GM12878 (cell line): ENCODE measurements at regions of chr4 and their contacts with region 1.

Region 1: GRCh38 chr4:25123236-25123635 is 37.0 kb downstream of the SEPSECS start:
- DNase-seq: peak; percentile 37
- ATAC-seq: peak; percentile 92
- H3K4me3 ChIP-seq: no peak overlapping the region
- H3K27ac ChIP-seq: no peak overlapping the region
- H3K4me1 ChIP-seq: no peaks in the 10 kb centered on the region
- H3K27me3 ChIP-seq: no peaks in the 10 kb centered on the region
- CTCF ChIP-seq: no peak
- EP300 ChIP-seq: no peak
- POLR2A ChIP-seq: no peak
- RAD21 ChIP-seq: no peak

Region 2: DNA sequence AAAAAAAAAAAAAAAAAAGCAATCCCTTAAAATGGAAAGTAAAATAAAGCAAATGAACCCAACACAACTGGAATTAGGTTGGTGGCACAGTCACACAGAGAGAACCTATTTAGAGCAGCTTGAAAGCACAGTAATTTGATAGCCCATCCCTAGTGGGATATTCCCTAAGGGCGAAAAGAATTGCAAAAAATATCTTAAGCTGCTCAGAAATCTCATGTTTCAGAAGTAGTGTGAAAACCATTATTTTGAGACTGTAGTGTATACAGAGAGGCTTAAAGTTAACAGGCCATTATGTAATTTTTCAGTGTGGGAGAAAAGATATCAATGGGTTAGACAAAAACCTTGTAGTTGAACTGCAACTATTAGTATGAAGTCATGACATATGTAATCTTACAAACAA is 498.9 kb before region 1 on chr4:
- CTCF ChIA-PET with region 1: no interaction called
- POLR2A ChIA-PET with region 1: no interaction called
- RAD21 ChIA-PET with region 1: no interaction called
- SMC1A ChIA-PET with region 1: no interaction called
- in situ Hi-C with region 1: no loop called
- intact Hi-C with region 1: loop called (anchors 5 kb)
- DNase-seq: no peak
- ATAC-seq: no peak
- H3K4me3 ChIP-seq: no peak overlapping the region
- H3K27ac ChIP-seq: no peak overlapping the region
- H3K4me1 ChIP-seq: no peaks in the 10 kb centered on the region
- H3K27me3 ChIP-seq: no peaks in the 10 kb centered on the region
- CTCF ChIP-seq: no peak
- EP300 ChIP-seq: no peak
- POLR2A ChIP-seq: no peak
- RAD21 ChIP-seq: no peak

Region 3: GRCh38 chr4:25098964-25099891 is 24.0 kb before region 1 on chr4:
- CTCF ChIA-PET with region 1: no interaction called
- POLR2A ChIA-PET with region 1: no interaction called
- RAD21 ChIA-PET with region 1: no interaction called
- SMC1A ChIA-PET with region 1: no interaction called
- in situ Hi-C with region 1: no loop called
- intact Hi-C with region 1: no loop called
- DNase-seq: no peak
- ATAC-seq: no peak
- H3K4me3 ChIP-seq: no peak overlapping the region
- H3K27ac ChIP-seq: no peak overlapping the region
- H3K4me1 ChIP-seq: no peaks in the 10 kb centered on the region
- H3K27me3 ChIP-seq: no peaks in the 10 kb centered on the region
- CTCF ChIP-seq: no peak
- EP300 ChIP-seq: no peak
- POLR2A ChIP-seq: no peak
- RAD21 ChIP-seq: no peak